AG04449 (cell line): ENCODE measurements at regions of chr6 and their contacts with region 1.

Region 1: GRCh38 chr6:37059344-37060206 is 54.1 kb downstream of the FGD2 start:
- DNase-seq: peak; percentile 80
- H3K4me3 ChIP-seq: peak overlapping the region; percentile 36
- CTCF ChIP-seq: peak; percentile 77

Region 2: DNA sequence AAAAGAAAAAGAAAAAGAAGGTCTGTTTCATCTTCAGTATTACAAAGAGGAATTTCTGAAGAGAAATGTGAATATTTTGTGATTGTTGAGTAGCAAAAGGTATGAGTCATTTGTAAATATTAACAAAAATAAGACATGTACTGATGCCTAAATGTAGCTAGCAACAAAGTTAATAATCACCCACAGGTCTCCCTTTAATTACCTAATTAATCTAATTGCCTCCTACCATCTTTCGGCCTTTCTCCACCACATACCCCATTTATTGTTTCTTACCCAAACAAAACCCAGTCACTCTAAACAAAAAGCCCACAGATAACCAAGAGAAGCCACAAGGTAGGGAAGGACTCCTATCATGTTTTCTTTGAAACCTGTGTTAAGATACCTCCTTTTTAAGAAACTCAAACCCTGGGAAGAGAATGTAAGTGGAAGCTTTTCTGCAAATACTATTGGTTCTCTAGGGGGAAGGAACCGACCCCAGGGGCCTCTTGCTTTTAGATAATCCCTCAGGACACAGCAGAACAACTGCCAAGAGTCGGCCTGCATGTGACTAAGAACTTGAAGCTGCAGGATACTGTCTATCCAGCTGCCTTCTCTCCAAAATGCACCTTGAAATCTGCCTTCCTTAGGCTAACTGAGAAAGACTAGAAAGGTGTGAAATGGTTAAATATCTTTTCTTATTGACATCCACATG is 496.2 kb before region 1 on chr6:
- CTCF ChIA-PET with region 1: no interaction called
- POLR2A ChIA-PET with region 1: no interaction called
- DNase-seq: no peak
- H3K4me3 ChIP-seq: no peak overlapping the region
- CTCF ChIP-seq: no peak

Region 3: GRCh38 chr6:37072526-37072925 is 13.0 kb after region 1 on chr6:
- CTCF ChIA-PET with region 1: interaction called, 22 read pairs
- POLR2A ChIA-PET with region 1: no interaction called
- DNase-seq: no peak
- H3K4me3 ChIP-seq: no peak overlapping the region
- CTCF ChIP-seq: no peak

Region 4: GRCh38 chr6:37077905-37078296 is 18.3 kb after region 1 on chr6:
- CTCF ChIA-PET with region 1: interaction called, 12 read pairs
- POLR2A ChIA-PET with region 1: no interaction called
- DNase-seq: peak; percentile 78
- H3K4me3 ChIP-seq: peak overlapping the region; percentile 12
- CTCF ChIP-seq: no peak

Region 5: GRCh38 chr6:37102279-37103168 is 42.9 kb after region 1 on chr6:
- CTCF ChIA-PET with region 1: interaction called, 12 read pairs
- POLR2A ChIA-PET with region 1: no interaction called
- DNase-seq: peak; percentile 49
- H3K4me3 ChIP-seq: peak overlapping the region; percentile 46
- CTCF ChIP-seq: no peak